ENCODE measurements at regions of chr10 and their contacts with region 1.

Region 1: GRCh38 chr10:119867317-119867716 is 5.3 kb downstream of the MCMBP start:
- DNase-seq: no peak

Region 2: DNA sequence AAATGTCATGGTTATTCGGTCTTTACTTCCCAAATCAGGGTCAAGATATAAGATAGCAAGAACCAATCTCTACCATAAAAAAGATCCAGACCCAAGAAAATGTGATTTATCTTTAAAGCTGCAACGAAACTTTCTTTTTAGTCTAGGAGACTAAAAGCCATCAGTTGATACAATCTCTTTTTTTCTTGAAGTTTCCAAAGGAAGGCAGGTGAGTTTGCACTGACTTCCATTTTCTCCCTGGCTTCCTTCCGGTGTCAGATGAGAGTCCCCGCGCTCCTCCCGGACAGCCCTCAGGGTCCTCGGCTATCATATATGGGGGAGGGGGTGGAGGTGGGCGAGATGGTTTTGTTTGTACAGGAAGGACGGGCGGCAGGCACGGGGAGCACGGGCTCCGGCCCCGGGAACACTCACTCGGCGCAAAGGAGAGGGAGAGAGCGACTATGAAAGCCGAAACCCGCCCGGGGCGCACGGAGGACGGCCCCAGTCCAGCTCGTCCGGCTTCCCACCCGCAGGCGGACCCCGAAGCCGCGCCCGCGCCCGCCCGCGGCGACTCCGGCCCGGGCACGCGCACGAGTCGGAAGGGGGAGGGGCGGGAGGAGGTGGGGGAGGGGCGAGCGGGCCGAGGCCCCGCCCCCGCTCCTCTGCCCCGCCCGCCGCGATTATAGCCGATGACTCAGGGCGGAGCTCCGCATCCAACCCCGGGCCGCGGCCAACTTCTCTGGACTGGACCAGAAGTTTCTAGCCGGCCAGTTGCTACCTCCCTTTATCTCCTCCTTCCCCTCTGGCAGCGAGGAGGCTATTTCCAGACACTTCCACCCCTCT is 216.4 kb before region 1 on chr10 and contains the start of gene BAG3:
- intact Hi-C with region 1: no loop called
- DNase-seq: peak; percentile 98
- total RNA-seq, gene BAG3: 52.6 to 65.2 TPM

Region 3: GRCh38 chr10:121524157-121524817 is 1657.0 kb after region 1 on chr10:
- intact Hi-C with region 1: loop called in 1 of 2 experiments (anchors 5 kb)
- DNase-seq: no peak

Measured in posterior vena cava (tissue), 2 donors.